IMR-90 (cell line): ENCODE measurements at regions of chr6 and their contacts with region 1.

Region 1: DNA sequence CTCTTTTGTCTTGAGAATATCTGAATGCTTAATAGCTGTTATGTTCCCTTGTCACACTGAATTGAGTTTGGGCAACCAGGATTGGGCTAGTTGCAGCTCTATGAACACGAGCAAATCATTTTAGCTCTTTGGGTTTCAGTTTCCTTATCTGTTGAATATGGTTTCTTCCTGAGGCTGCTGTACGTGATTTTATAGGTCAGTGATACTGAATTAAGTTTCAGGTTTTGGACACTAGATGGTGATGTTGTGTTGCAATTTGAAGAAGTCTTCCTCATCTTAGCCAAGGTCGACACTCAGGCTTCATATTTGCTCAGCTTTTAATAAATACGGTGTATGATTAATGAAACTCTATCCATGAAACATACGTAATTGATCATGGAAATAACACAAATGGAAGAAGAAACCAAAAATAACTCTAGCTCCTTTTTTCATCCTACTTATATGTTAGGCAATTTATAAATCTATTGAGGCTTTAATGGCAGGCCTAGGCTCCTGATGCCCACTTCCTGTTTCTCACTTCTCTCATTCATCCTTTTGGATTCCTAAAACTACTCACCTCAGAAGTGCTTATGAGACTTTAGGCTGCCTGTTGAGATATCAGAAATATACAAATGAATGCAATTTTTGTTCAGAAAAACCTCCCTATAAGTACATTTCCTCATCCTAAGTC is 354.1 kb upstream of the MAP3K7 start:
- DNase-seq: peak; percentile 66
- ATAC-seq: peak; percentile 85
- H3K4me3 ChIP-seq: no peak overlapping the region; the same call in 1 of the 2 replicates
- H3K27ac ChIP-seq: no peak overlapping the region
- H3K4me1 ChIP-seq: no peaks in the 10 kb centered on the region
- H3K27me3 ChIP-seq: no peaks in the 10 kb centered on the region
- CTCF ChIP-seq: peak; percentile 60
- POLR2A ChIP-seq: no peak
- RAD21 ChIP-seq: peak; percentile 64

Region 2: DNA sequence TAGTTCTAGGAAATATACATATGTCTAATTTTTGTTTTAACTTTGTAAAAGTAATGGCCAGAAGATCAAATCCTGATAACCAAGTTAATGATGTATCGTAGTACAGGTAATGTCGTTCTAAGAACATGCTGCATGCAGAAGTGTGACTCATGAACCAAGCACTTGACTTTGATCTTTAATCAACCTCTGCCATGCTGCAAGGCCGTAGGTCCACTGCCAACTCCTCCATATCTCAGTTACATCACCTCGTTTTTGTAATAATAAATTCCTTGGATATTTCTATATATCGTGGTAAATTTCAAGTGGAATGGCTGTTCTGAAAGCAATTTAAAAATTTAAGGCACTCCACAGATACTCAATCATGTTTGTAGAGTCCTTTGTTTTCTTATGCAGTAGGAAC is 1706.7 kb after region 1 on chr6:
- CTCF ChIA-PET with region 1: no interaction called
- POLR2A ChIA-PET with region 1: no interaction called
- dilution Hi-C with region 1: no loop called
- in situ Hi-C with region 1: no loop called
- intact Hi-C with region 1: loop called (anchors 10 kb)
- DNase-seq: no peak
- ATAC-seq: no peak
- H3K4me3 ChIP-seq: no peak overlapping the region
- H3K27ac ChIP-seq: no peak overlapping the region
- H3K4me1 ChIP-seq: no peaks in the 10 kb centered on the region
- H3K27me3 ChIP-seq: no peaks in the 10 kb centered on the region
- CTCF ChIP-seq: no peak
- POLR2A ChIP-seq: no peak
- RAD21 ChIP-seq: no peak

Region 3: DNA sequence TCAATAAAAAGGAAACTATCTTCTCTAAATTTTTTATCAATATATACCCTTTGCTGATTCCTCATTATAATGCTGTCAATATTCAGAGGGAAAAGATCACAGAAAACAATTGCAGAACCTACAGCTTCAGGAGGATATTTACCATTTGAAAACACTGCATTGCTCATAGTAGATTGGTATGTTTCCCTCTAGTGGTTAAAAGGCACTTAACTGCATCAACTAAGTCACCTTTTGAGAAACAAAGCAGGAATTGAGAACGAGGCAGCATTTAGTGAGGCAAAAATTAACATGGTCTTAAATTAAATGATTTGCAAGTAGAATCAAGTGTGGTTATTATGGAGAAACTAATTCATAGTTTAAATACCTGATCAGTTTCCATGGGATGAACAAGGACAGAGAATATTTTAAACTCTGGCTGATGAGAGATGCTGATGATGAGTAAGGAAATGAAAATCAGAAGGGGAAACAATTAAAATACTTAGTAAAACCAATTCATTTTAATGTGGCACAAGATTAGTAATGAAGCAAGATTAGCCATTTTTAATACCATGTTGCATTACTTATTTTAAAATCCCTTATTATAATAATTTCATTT is 1836.3 kb after region 1 on chr6:
- CTCF ChIA-PET with region 1: no interaction called
- POLR2A ChIA-PET with region 1: no interaction called
- dilution Hi-C with region 1: no loop called
- in situ Hi-C with region 1: no loop called
- intact Hi-C with region 1: loop called (anchors 5 kb)
- DNase-seq: peak; percentile 42
- ATAC-seq: peak; percentile 62
- H3K4me3 ChIP-seq: no peak overlapping the region
- H3K27ac ChIP-seq: no peak overlapping the region
- H3K4me1 ChIP-seq: no peaks in the 10 kb centered on the region
- H3K27me3 ChIP-seq: no peaks in the 10 kb centered on the region
- CTCF ChIP-seq: peak; percentile 56
- POLR2A ChIP-seq: no peak
- RAD21 ChIP-seq: peak; percentile 54